ENCODE measurements at regions of chr18 and their contacts with region 1.

Region 1: DNA sequence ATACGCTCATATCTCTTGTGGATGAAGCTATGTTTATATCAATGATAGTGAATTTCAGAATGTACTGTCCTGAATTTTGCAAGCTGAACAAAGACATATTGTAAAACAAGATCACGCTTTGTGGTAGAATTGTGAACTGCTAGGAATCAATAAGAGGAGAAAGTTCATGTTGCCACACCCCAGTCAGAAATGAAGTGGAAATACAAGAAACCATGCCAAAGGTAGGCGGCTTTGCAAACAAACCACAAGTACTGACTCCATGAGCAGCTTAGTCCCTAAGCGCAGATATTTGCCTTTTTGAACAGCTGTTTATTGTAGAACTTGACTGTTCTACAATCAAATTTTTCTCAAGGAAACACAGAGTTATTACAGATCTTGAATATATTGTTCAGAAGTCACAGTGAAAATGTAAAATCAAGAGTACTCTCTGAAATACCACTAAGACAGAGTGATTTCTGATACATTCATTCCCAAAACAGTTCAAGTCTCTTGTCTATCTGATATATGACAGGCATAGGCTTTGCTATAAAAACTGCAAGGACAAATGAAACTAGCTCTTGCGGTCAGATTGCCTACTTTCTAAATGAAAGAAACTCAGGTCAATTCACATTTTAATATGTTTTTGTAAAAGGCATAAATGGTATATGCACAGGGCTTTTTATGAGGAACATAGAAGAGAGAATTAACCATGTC is 120.9 kb upstream of the CDH19 start:
- DNase-seq: peak in 3 of 5 donors; percentile 27 to 44 (median 32)
- ATAC-seq: peak; percentile 79 to 91 (median 83)
- H3K4me3 ChIP-seq: no peak overlapping the region
- H3K27ac ChIP-seq: peak overlapping the region; percentile 29 to 82 (median 63)
- H3K4me1 ChIP-seq: peaks cover 0 to 11% (median 0%) of the 10 kb centered on the region in 12 donors
- H3K27me3 ChIP-seq: no peaks in the 10 kb centered on the region
- CTCF ChIP-seq: no peak
- POLR2A ChIP-seq: no peak

Region 2: GRCh38 chr18:66603941-66604627 is 120.7 kb before region 1 on chr18 and contains the start of gene CDH19:
- intact Hi-C with region 1: loop called in 3 of 10 experiments (anchors 10 kb)
- DNase-seq: peak in 2 of 5 donors; percentile 8 to 24
- ATAC-seq: peak; percentile 79 to 95 (median 88)
- H3K4me3 ChIP-seq: peak within 1 kb of the TSS in 11 of 12 donors; percentile 0 to 56 (median 43)
- H3K27ac ChIP-seq: peak within 1 kb of the TSS in 11 of 12 donors; percentile 28 to 75 (median 55)
- H3K4me1 ChIP-seq: no peaks in the 10 kb centered on the region
- H3K27me3 ChIP-seq: no peaks in the 10 kb centered on the region
- CTCF ChIP-seq: no peak
- POLR2A ChIP-seq: peak in 1 of 2 donors; percentile 36
- total RNA-seq, gene CDH19: 7.8 to 51.7 (median 12.8) TPM

Region 3: GRCh38 chr18:66682855-66683322 is 41.9 kb before region 1 on chr18:
- intact Hi-C with region 1: loop called in 1 of 10 experiments (anchors 10 kb)
- DNase-seq: no peak
- ATAC-seq: peak; percentile 90 to 91 (median 91)
- H3K4me3 ChIP-seq: peak overlapping the region in 10 of 12 donors; percentile 5 to 48 (median 36)
- H3K27ac ChIP-seq: peak overlapping the region in 11 of 12 donors; percentile 11 to 85 (median 67)
- H3K4me1 ChIP-seq: peaks cover 0 to 6% (median 0%) of the 10 kb centered on the region in 12 donors
- H3K27me3 ChIP-seq: no peaks in the 10 kb centered on the region
- CTCF ChIP-seq: no peak
- POLR2A ChIP-seq: no peak

Region 4: DNA sequence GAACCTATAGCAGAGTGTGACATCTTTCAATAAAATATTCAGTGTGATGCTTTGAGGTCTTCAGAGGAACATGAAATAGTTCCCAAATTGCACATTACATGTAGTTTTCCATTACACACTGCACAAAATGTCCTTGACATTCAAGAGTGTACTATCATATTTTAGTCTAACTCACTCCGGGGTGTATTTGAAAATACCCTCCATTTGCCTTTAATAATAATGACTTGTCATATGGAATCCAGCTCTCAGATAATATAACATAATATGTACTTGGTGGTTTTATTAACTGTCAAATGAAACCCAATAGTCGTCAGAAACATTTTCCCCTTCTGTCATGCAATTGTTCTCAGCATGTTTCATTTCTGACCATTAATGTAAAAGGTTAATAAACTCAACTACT is 55.8 kb after region 1 on chr18:
- intact Hi-C with region 1: no loop called
- DNase-seq: no peak
- ATAC-seq: no peak
- H3K4me3 ChIP-seq: no peak overlapping the region
- H3K27ac ChIP-seq: no peak overlapping the region
- H3K4me1 ChIP-seq: no peaks in the 10 kb centered on the region
- H3K27me3 ChIP-seq: no peaks in the 10 kb centered on the region
- CTCF ChIP-seq: no peak
- POLR2A ChIP-seq: no peak